CD8-positive, alpha-beta T cell (primary cell): ENCODE measurements at regions of chr1 and their contacts with region 1.

Region 1: GRCh38 chr1:39919545-39919944 is 17.8 kb upstream of the MYCL start:
- DNase-seq: peak in 8 of 9 experiments; percentile 13 to 79 (median 28)
- ATAC-seq: peak; percentile 100
- H3K4me3 ChIP-seq: no peak overlapping the region
- H3K4me3 Mint-ChIP-seq: no peak overlapping the region
- H3K27ac ChIP-seq: no peak overlapping the region
- H3K27ac Mint-ChIP-seq: no peak overlapping the region
- H3K4me1 ChIP-seq: no peaks in the 10 kb centered on the region
- H3K4me1 Mint-ChIP-seq: peaks cover 2% of the 10 kb centered on the region
- H3K27me3 ChIP-seq: no peaks in the 10 kb centered on the region
- H3K27me3 Mint-ChIP-seq: peaks cover 2% of the 10 kb centered on the region
- CTCF ChIP-seq: peak; percentile 67

Region 2: GRCh38 chr1:39816415-39817090 is 103.0 kb before region 1 on chr1:
- CTCF ChIA-PET with region 1: interaction called, 20 read pairs
- POLR2A ChIA-PET with region 1: interaction called, 3 read pairs
- intact Hi-C with region 1: no loop called
- DNase-seq: peak in 8 of 9 experiments; percentile 5 to 81 (median 62)
- ATAC-seq: peak; percentile 70
- H3K4me3 ChIP-seq: peak overlapping the region; percentile 9 to 31
- H3K4me3 Mint-ChIP-seq: peak overlapping the region; percentile 77
- H3K27ac ChIP-seq: no peak overlapping the region
- H3K27ac Mint-ChIP-seq: no peak overlapping the region
- H3K4me1 ChIP-seq: peaks cover 11% of the 10 kb centered on the region
- H3K4me1 Mint-ChIP-seq: peaks cover 13% of the 10 kb centered on the region
- H3K27me3 ChIP-seq: no peaks in the 10 kb centered on the region
- H3K27me3 Mint-ChIP-seq: peaks cover 12% of the 10 kb centered on the region
- CTCF ChIP-seq: peak; percentile 68

Region 3: DNA sequence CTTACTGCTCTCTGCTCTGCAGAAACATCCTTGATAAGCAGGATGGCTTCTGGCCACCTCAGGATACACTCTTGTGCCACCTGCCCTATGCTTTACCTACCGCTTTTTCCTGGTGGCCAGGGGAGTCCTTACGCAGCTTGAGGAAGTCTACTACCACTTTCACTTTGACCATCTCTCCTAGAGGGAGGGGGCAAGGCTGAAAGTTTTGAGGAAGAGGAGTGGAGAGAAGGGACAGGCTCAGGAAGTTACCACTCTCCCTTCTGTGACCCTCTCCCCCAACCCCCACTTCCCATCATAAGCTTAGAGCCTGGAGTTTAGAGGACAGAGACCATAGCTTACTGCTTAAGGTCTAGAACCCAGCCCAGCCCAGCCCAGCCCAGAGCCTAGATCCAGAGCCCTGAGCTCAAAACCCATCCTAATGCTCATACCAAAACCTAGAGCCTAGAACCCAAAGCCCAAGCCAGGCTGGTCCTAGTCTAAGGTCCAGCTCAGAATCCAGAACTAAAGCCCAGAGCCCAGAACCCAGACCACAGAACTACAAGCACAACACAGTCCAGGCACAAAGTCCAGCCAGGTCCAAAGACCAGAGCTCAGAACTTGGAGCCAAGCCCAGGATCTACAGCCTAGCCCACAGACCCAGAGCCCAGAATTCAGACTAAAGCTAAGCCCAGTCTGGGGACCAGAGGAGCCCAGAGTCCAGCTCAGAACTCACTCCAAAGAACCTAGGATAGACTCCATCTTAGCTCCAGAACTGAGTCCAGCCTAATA is 17.4 kb after region 1 on chr1:
- CTCF ChIA-PET with region 1: interaction called, 14 read pairs
- POLR2A ChIA-PET with region 1: no interaction called
- intact Hi-C with region 1: no loop called
- DNase-seq: no peak
- ATAC-seq: no peak
- H3K4me3 ChIP-seq: no peak overlapping the region
- H3K4me3 Mint-ChIP-seq: no peak overlapping the region
- H3K27ac ChIP-seq: no peak overlapping the region
- H3K27ac Mint-ChIP-seq: no peak overlapping the region
- H3K4me1 ChIP-seq: no peaks in the 10 kb centered on the region
- H3K4me1 Mint-ChIP-seq: no peaks in the 10 kb centered on the region
- H3K27me3 ChIP-seq: no peaks in the 10 kb centered on the region
- H3K27me3 Mint-ChIP-seq: no peaks in the 10 kb centered on the region
- CTCF ChIP-seq: no peak

Region 4: DNA sequence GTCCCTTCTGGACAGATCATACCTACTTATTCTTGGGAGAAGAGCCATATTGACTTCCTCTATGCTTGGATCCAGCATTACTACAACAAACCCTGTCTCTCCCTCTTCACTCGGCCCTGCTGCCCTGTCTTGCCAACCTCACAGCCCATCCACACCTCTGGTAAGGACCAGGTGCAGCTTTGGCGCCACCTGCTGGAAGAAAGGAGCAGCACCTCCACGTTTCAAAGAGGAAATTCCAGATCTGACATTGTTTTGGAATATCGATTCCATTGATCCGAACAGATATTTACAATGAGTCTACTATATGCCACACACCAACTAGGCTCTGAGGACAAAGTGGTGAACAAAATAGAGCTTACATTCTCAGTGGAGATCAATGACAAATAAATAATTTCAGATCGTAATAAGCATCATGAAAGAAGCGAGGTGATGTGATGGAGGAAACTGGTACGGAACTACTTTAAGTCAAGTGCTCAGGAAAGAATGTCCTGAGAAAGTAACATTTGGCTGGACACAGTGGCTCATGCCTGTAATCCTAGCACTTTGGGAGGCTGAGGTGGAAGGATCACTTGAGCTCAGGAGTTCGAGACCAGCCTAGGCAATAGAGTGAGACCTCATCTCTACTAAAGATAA is 54.1 kb after region 1 on chr1:
- CTCF ChIA-PET with region 1: interaction called, 196 read pairs
- POLR2A ChIA-PET with region 1: interaction called, 4 read pairs
- intact Hi-C with region 1: loop called (anchors 1 kb)
- DNase-seq: peak; percentile 51 to 84 (median 76)
- ATAC-seq: peak; percentile 75
- H3K4me3 ChIP-seq: no peak overlapping the region
- H3K4me3 Mint-ChIP-seq: no peak overlapping the region
- H3K27ac ChIP-seq: no peak overlapping the region
- H3K27ac Mint-ChIP-seq: no peak overlapping the region
- H3K4me1 ChIP-seq: peaks cover 3% of the 10 kb centered on the region
- H3K4me1 Mint-ChIP-seq: peaks cover 5% of the 10 kb centered on the region
- H3K27me3 ChIP-seq: no peaks in the 10 kb centered on the region
- H3K27me3 Mint-ChIP-seq: no peaks in the 10 kb centered on the region
- CTCF ChIP-seq: peak; percentile 92

Region 5: GRCh38 chr1:40049725-40050124 is 130.2 kb after region 1 on chr1:
- CTCF ChIA-PET with region 1: no interaction called
- POLR2A ChIA-PET with region 1: no interaction called
- intact Hi-C with region 1: no loop called
- DNase-seq: peak in 1 of 9 experiments; percentile 42
- ATAC-seq: peak; percentile 15
- H3K4me3 ChIP-seq: no peak overlapping the region
- H3K4me3 Mint-ChIP-seq: peak overlapping the region; percentile 71
- H3K27ac ChIP-seq: peak overlapping the region in 1 of 2 experiments; percentile 24
- H3K27ac Mint-ChIP-seq: peak overlapping the region; percentile 92
- H3K4me1 ChIP-seq: peaks cover 85% of the 10 kb centered on the region
- H3K4me1 Mint-ChIP-seq: peaks cover 84% of the 10 kb centered on the region
- H3K27me3 ChIP-seq: no peaks in the 10 kb centered on the region
- H3K27me3 Mint-ChIP-seq: no peaks in the 10 kb centered on the region
- CTCF ChIP-seq: no peak

Region 6: DNA sequence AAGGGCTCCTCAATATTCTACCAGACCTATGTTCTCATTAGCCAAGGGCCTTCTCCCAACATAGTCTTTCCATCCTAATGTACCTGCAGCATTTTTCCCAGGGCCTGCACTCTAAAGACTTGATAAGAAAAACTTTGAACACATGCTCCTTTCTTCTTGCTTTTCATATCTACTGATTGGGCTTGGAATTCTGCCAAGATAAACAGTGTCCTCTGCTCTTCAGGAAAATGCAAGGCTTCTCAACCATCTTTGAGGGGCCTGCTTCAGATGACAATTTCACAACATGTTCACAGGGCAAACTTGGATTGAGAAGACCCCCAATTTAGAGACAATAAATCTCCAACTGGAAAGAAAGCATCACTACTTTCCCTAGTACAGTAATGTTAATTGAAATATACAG is 203.3 kb after region 1 on chr1:
- CTCF ChIA-PET with region 1: no interaction called
- POLR2A ChIA-PET with region 1: no interaction called
- intact Hi-C with region 1: loop called in 1 of 2 experiments (anchors 10 kb)
- DNase-seq: no peak
- ATAC-seq: no peak
- H3K4me3 ChIP-seq: no peak overlapping the region
- H3K4me3 Mint-ChIP-seq: no peak overlapping the region
- H3K27ac ChIP-seq: no peak overlapping the region
- H3K27ac Mint-ChIP-seq: no peak overlapping the region
- H3K4me1 ChIP-seq: no peaks in the 10 kb centered on the region
- H3K4me1 Mint-ChIP-seq: no peaks in the 10 kb centered on the region
- H3K27me3 ChIP-seq: no peaks in the 10 kb centered on the region
- H3K27me3 Mint-ChIP-seq: peaks cover 10% of the 10 kb centered on the region
- CTCF ChIP-seq: no peak

Region 7: DNA sequence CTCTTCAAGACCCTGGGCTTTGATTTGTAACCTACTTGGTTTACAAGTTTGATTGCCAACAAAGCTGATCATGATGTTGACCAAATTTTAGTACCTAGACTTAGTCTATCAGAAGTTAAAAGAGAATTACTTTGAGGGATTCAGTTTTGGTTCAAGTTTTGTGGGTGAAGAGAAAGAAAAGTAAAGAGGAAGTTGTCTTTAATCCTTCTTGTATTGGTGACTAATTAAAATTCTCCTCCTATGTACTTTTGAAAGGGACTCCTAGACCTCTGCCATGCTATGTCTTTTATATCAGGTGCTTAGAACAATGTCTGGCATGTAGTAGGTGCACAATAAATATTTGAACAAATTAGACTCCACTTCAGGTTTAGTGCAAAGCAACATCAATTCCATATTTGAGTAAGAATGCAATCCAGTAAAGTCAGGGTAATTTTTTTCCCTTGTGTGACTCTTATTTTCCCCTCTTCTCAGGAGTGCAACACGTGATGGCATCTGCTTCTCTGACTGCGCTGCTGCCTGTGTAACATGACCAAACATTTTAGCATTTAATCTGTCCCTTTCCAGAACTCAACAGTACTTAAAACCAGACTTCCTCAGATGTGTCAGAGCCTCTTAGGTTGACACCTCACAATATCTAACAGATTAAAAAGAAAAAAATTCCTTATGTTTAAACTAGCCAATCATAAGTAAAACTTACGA is 823.0 kb after region 1 on chr1:
- CTCF ChIA-PET with region 1: no interaction called
- POLR2A ChIA-PET with region 1: no interaction called
- intact Hi-C with region 1: no loop called
- DNase-seq: no peak
- ATAC-seq: no peak
- H3K4me3 ChIP-seq: no peak overlapping the region
- H3K4me3 Mint-ChIP-seq: no peak overlapping the region
- H3K27ac ChIP-seq: no peak overlapping the region
- H3K27ac Mint-ChIP-seq: peak overlapping the region; percentile 33
- H3K4me1 ChIP-seq: peaks cover 4% of the 10 kb centered on the region
- H3K4me1 Mint-ChIP-seq: peaks cover 49% of the 10 kb centered on the region
- H3K27me3 ChIP-seq: no peaks in the 10 kb centered on the region
- H3K27me3 Mint-ChIP-seq: no peaks in the 10 kb centered on the region
- CTCF ChIP-seq: no peak